ENCODE measurements at regions of chr12 and their contacts with region 1.

Region 1: GRCh38 chr12:68958322-68958721 is 25.4 kb upstream of the CPM start:
- DNase-seq: no peak
- ATAC-seq: peak; percentile 24
- H3K4me3 ChIP-seq: no peak overlapping the region
- H3K4me3 Mint-ChIP-seq: peak overlapping the region; percentile 18
- H3K27ac ChIP-seq: no peak overlapping the region
- H3K27ac Mint-ChIP-seq: no peak overlapping the region
- H3K4me1 ChIP-seq: peaks cover 6 to 8% of the 10 kb centered on the region in 2 donors
- H3K4me1 Mint-ChIP-seq: peaks cover 10% of the 10 kb centered on the region
- H3K27me3 ChIP-seq: no peaks in the 10 kb centered on the region
- H3K27me3 Mint-ChIP-seq: no peaks in the 10 kb centered on the region
- CTCF ChIP-seq: no peak

Region 2: GRCh38 chr12:68943848-68944247 is 14.5 kb before region 1 on chr12:
- CTCF ChIA-PET with region 1: no interaction called
- POLR2A ChIA-PET with region 1: interaction called, 10 read pairs
- intact Hi-C with region 1: no loop called
- DNase-seq: no peak
- ATAC-seq: no peak
- H3K4me3 ChIP-seq: no peak overlapping the region
- H3K4me3 Mint-ChIP-seq: no peak overlapping the region
- H3K27ac ChIP-seq: no peak overlapping the region
- H3K27ac Mint-ChIP-seq: no peak overlapping the region
- H3K4me1 ChIP-seq: no peaks in the 10 kb centered on the region
- H3K4me1 Mint-ChIP-seq: peaks cover 3% of the 10 kb centered on the region
- H3K27me3 ChIP-seq: no peaks in the 10 kb centered on the region
- H3K27me3 Mint-ChIP-seq: no peaks in the 10 kb centered on the region
- CTCF ChIP-seq: no peak

Region 3: DNA sequence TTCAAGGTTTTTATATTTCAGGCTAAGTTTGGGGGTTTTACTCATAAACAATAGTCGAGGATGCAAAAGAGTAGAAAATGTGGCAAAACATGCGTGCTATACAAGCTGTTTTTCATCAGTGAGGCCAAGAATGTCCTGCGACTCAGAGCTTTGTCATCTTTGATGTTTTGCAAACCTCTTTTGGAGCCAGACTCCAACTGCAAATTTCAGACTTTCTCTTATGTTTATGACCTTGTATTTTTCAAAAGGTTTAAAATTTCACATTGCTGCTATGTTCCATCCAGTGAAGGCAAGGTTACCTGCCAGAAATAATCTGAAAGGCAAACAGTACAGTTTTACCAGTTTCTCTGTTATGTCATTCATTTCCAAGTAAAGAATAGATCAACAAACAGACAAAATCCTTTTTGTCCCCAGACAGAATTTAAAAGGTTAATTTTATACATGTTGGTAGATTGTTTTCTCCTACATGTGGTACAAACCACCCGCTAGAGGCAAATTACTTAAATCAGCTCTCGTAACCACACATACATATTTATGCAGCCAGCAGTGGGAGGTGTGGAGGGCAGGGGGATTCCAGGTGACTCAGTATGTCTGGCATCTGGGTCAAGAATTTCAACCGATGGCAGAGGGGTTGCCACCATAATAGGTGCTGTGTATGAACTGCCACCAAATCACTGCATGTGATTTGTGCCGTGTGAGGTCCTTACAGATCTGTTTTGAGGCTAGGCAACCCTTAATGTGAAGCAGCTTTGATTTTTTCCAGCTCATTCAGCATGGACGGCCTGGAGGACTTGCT is 94.5 kb after region 1 on chr12:
- CTCF ChIA-PET with region 1: no interaction called
- POLR2A ChIA-PET with region 1: no interaction called
- intact Hi-C with region 1: loop called (anchors 10 kb)
- DNase-seq: no peak
- ATAC-seq: peak; percentile 56
- H3K4me3 ChIP-seq: no peak overlapping the region
- H3K4me3 Mint-ChIP-seq: no peak overlapping the region
- H3K27ac ChIP-seq: no peak overlapping the region
- H3K27ac Mint-ChIP-seq: no peak overlapping the region
- H3K4me1 ChIP-seq: no peaks in the 10 kb centered on the region
- H3K4me1 Mint-ChIP-seq: peaks cover 4% of the 10 kb centered on the region
- H3K27me3 ChIP-seq: no peaks in the 10 kb centered on the region
- H3K27me3 Mint-ChIP-seq: peaks cover 10% of the 10 kb centered on the region
- CTCF ChIP-seq: no peak